ENCODE measurements at regions of chr2 and their contacts with region 1.

Region 1: DNA sequence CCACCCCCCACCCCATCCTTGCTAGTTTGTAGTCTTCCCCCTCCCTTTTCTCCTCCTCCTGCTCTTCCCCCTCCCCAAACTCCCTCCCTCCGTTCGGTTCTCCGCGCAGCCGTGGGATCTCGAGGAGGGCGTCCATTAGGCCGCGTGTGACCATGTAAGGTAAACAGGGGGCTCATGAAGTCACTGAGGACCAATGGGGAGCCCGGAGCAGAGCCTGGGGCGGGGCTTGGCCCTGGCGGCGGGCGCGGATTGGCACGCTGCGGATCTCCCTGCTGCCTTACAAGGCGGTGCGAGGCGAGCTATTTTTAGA is 246 bp upstream of the KLF7 start:
- DNase-seq: peak; percentile 94
- ATAC-seq: peak; percentile 94
- H3K4me3 ChIP-seq: peak overlapping the region; percentile 56 to 78 (median 69); a peak in 5 of 6 replicates
- H3K27ac ChIP-seq: peak overlapping the region; percentile 96
- H3K4me1 ChIP-seq: peaks cover 41% of the 10 kb centered on the region
- H3K27me3 ChIP-seq: peaks cover 0 to 4% of the 10 kb centered on the region in 2 experiments; a peak in 2 of 5 replicates
- CTCF ChIP-seq: no peak
- EP300 ChIP-seq: peak in 1 of 2 experiments; percentile 27; a peak in 1 of 4 replicates
- POLR2A ChIP-seq: no peak
- RAD21 ChIP-seq: no peak

Region 2: GRCh38 chr2:206981739-206982340 is 184.2 kb before region 1 on chr2:
- CTCF ChIA-PET with region 1: no interaction called
- POLR2A ChIA-PET with region 1: no interaction called
- in situ Hi-C with region 1: no loop called
- intact Hi-C with region 1: loop called (anchors 10 kb)
- DNase-seq: no peak
- ATAC-seq: peak; percentile 86
- H3K4me3 ChIP-seq: no peak overlapping the region
- H3K27ac ChIP-seq: no peak overlapping the region
- H3K4me1 ChIP-seq: no peaks in the 10 kb centered on the region
- H3K27me3 ChIP-seq: peaks cover 0 to 6% of the 10 kb centered on the region in 2 experiments; a peak in 1 of 5 replicates
- CTCF ChIP-seq: peak; percentile 67
- EP300 ChIP-seq: no peak
- POLR2A ChIP-seq: no peak
- RAD21 ChIP-seq: peak; percentile 61

Region 3: GRCh38 chr2:207046724-207047123 is 119.3 kb before region 1 on chr2:
- CTCF ChIA-PET with region 1: no interaction called
- POLR2A ChIA-PET with region 1: no interaction called
- in situ Hi-C with region 1: no loop called
- intact Hi-C with region 1: loop called (anchors 10 kb)
- DNase-seq: no peak
- ATAC-seq: peak; percentile 39; the same call in 1 of the 3 replicates
- H3K4me3 ChIP-seq: no peak overlapping the region
- H3K27ac ChIP-seq: no peak overlapping the region
- H3K4me1 ChIP-seq: peaks cover 23% of the 10 kb centered on the region
- H3K27me3 ChIP-seq: no peaks in the 10 kb centered on the region; a peak in 1 of 5 replicates
- CTCF ChIP-seq: peak; percentile 31
- EP300 ChIP-seq: no peak
- POLR2A ChIP-seq: no peak
- RAD21 ChIP-seq: no peak

Region 4: GRCh38 chr2:207083361-207084110 is 82.5 kb before region 1 on chr2:
- CTCF ChIA-PET with region 1: no interaction called
- POLR2A ChIA-PET with region 1: interaction called, 4 read pairs
- in situ Hi-C with region 1: no loop called
- intact Hi-C with region 1: loop called (anchors 2 kb)
- DNase-seq: no peak
- ATAC-seq: no peak
- H3K4me3 ChIP-seq: no peak overlapping the region
- H3K27ac ChIP-seq: no peak overlapping the region
- H3K4me1 ChIP-seq: peaks cover 13% of the 10 kb centered on the region
- H3K27me3 ChIP-seq: no peaks in the 10 kb centered on the region
- CTCF ChIP-seq: no peak
- EP300 ChIP-seq: no peak
- POLR2A ChIP-seq: no peak
- RAD21 ChIP-seq: no peak

Region 5: DNA sequence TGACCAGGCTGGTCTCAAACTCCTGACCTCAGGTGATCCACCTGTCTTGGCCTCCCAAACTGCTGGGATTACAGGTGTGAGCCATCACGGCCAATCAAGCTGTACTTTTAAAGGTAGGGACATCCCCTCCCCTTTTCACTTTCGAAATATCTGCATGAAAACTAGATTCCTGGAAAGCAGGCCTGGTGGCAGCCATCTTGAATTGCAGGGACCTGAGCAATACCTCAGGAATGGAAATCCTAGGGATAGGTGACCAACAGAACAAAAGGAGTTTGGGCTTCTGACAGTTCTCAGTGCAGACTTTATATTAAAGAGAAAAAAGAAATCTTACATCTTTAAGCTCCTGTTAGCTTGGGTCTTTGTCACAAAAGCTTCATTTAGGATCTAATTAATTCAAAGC is 62.9 kb before region 1 on chr2:
- CTCF ChIA-PET with region 1: no interaction called
- POLR2A ChIA-PET with region 1: no interaction called
- in situ Hi-C with region 1: no loop called
- intact Hi-C with region 1: no loop called
- DNase-seq: no peak
- ATAC-seq: no peak
- H3K4me3 ChIP-seq: no peak overlapping the region
- H3K27ac ChIP-seq: no peak overlapping the region
- H3K4me1 ChIP-seq: no peaks in the 10 kb centered on the region; the same call in 1 of the 2 replicates
- H3K27me3 ChIP-seq: no peaks in the 10 kb centered on the region
- CTCF ChIP-seq: no peak
- EP300 ChIP-seq: no peak
- POLR2A ChIP-seq: no peak
- RAD21 ChIP-seq: no peak

Region 6: GRCh38 chr2:207194017-207194416 is 28.0 kb after region 1 on chr2:
- CTCF ChIA-PET with region 1: no interaction called
- POLR2A ChIA-PET with region 1: no interaction called
- in situ Hi-C with region 1: no loop called
- intact Hi-C with region 1: no loop called
- DNase-seq: no peak
- ATAC-seq: no peak
- H3K4me3 ChIP-seq: no peak overlapping the region
- H3K27ac ChIP-seq: no peak overlapping the region
- H3K4me1 ChIP-seq: no peaks in the 10 kb centered on the region
- H3K27me3 ChIP-seq: no peaks in the 10 kb centered on the region; a peak in 1 of 5 replicates
- CTCF ChIP-seq: no peak
- EP300 ChIP-seq: no peak
- POLR2A ChIP-seq: no peak
- RAD21 ChIP-seq: no peak

Region 7: GRCh38 chr2:207408086-207408794 is 242.2 kb after region 1 on chr2:
- CTCF ChIA-PET with region 1: no interaction called
- POLR2A ChIA-PET with region 1: no interaction called
- in situ Hi-C with region 1: no loop called
- intact Hi-C with region 1: no loop called
- DNase-seq: peak; percentile 32
- ATAC-seq: peak; percentile 98
- H3K4me3 ChIP-seq: no peak overlapping the region
- H3K27ac ChIP-seq: no peak overlapping the region
- H3K4me1 ChIP-seq: peaks cover 17% of the 10 kb centered on the region
- H3K27me3 ChIP-seq: no peaks in the 10 kb centered on the region
- CTCF ChIP-seq: no peak
- EP300 ChIP-seq: 0 out of 4 replicates have a peak, but pooled peaks of 1 of the 2 experiments have one; percentile 19
- POLR2A ChIP-seq: no peak
- RAD21 ChIP-seq: no peak